Endothelial cell of umbilical vein (primary cell): ENCODE measurements at regions of chr3 and their contacts with region 1.

Region 1: DNA sequence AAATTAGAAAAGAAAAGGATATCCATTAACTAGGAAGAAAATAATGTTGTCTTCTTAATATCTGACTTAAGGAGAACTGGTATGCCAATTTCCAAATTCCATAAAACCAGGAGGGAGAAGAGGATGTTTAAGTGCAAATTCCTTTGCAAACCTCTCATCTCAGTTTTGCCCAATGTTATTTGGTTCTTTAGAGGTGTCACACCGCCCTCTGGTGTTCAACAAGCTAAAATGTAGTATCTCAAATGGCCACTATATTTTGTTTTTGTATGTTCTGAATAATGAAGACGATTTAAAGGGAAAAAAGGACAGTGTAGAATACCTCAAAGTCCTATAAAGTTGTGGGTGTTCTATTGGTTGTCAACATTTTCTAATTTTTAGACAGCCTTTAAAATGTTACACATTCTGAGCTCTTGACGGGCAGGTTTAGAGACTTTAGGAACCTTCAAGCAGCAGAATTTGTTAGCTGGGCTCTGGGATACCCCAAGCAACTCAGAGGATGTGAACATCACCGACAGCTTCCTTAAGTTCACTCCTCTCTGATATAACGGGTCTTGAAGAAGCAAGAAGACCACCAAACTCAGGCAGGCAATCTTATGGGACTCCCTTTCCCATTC is 458.3 kb downstream of the MFSD1 start:
- DNase-seq: peak; percentile 65
- H3K4me3 ChIP-seq: no peak overlapping the region
- H3K27ac ChIP-seq: no peak overlapping the region
- H3K4me1 ChIP-seq: no peaks in the 10 kb centered on the region
- H3K27me3 ChIP-seq: peaks cover 2 to 21% of the 10 kb centered on the region in 2 experiments
- CTCF ChIP-seq: peak; percentile 42 to 43
- POLR2A ChIP-seq: no peak

Region 2: DNA sequence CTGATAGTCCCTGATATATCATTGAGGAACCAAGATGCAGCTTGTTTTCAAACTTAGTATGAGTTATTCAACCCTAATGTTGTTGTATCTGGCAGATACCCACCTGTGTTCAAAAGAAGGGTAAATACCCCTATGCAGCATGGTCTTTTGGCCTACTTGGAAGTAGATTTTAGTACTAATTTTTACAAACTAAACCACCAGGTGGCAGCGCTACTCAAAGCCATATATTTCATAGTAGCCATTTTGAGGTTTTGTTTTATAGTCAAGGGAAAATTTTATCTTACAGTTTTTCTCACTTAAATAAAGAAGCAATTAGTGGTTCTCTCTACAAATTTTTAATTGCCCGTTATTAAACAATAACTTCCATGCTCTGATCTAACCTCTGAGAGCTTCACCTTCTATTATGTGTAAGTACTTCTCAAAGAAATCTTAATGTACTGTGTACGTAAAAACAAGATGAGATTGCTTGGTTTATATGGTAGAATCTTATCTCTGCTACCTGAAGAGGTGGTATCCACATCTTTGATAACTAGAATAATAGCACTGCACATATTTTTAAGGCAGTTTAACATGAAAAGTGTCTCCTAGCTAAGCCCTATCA is 720.6 kb before region 1 on chr3:
- CTCF ChIA-PET with region 1: interaction called, 3 read pairs
- POLR2A ChIA-PET with region 1: no interaction called
- dilution Hi-C with region 1: no loop called
- intact Hi-C with region 1: loop called (anchors 5 kb)
- DNase-seq: peak; percentile 70
- H3K4me3 ChIP-seq: no peak overlapping the region
- H3K27ac ChIP-seq: no peak overlapping the region
- H3K4me1 ChIP-seq: no peaks in the 10 kb centered on the region
- H3K27me3 ChIP-seq: no peaks in the 10 kb centered on the region
- CTCF ChIP-seq: peak; percentile 37 to 41
- POLR2A ChIP-seq: no peak

Region 3: DNA sequence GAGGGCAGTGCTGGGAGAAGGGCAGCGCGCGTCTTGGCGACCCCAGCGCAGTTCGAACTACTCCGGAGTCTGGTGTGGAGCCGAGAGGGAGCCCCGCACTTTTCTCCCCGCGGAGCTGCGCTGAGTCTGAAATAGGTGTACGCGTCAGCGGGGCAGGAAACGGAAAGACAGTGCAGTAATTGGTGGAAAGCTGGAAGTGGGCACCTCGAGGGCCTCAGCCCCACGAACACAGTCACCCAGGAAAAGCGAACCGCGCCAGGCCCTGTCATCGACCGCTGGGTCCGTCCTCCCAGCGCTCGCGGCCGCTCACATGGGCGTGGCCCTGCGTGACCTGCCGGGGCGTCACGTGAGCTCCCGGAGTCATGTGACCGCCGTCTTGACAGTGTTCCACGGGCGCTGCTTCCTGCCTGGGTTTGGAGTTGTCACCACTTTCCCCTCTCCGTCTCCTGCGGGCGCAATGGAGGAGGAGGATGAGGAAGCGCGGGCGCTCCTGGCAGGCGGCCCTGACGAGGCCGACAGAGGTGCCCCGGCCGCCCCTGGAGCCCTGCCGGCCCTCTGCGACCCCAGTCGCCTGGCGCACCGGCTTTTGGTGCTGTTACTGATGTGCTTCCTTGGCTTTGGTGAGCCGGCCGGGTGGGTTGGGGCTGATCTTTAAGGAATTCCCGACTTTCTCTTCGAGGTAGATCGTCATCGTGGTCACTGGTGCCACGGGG is 458.3 kb before region 1 on chr3 and contains the start of gene MFSD1:
- CTCF ChIA-PET with region 1: interaction called, 96 read pairs
- POLR2A ChIA-PET with region 1: no interaction called
- dilution Hi-C with region 1: no loop called
- intact Hi-C with region 1: no loop called
- DNase-seq: peak; percentile 87
- H3K4me3 ChIP-seq: peak within 1 kb of the TSS; percentile 47 to 78 (median 72)
- H3K27ac ChIP-seq: peak within 1 kb of the TSS; percentile 27
- H3K4me1 ChIP-seq: peaks cover 16% of the 10 kb centered on the region
- H3K27me3 ChIP-seq: no peaks in the 10 kb centered on the region
- CTCF ChIP-seq: no peak
- POLR2A ChIP-seq: peak; percentile 87
- total RNA-seq, gene MFSD1: 38.2 and 38.3 TPM in 2 replicates

Region 4: DNA sequence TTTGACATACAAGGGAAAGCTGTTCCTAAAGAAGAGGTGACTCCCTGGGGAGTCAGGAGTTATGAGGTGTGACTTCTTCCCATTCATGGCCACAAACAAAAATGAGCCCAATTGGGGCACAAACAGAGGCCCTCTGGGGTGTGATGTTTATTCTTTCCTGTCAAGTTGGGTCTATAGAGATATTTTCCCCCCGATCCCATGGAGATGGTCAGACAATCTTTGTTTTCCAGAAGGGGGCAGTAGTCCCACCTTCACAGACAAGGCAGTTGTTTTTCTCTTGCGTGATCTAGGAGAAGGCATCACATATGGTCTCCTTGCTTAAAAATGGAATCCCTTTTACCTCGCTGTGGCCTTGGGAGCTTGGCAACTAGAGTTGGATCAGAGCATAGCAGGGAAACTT is 348.0 kb before region 1 on chr3:
- CTCF ChIA-PET with region 1: interaction called, 121 read pairs
- POLR2A ChIA-PET with region 1: no interaction called
- dilution Hi-C with region 1: loop called (anchors 25 kb)
- intact Hi-C with region 1: no loop called
- DNase-seq: peak; percentile 4
- H3K4me3 ChIP-seq: no peak overlapping the region
- H3K27ac ChIP-seq: no peak overlapping the region
- H3K4me1 ChIP-seq: no peaks in the 10 kb centered on the region
- H3K27me3 ChIP-seq: no peaks in the 10 kb centered on the region
- CTCF ChIP-seq: peak in 1 of 2 donors; percentile 21
- POLR2A ChIP-seq: no peak

Region 5: DNA sequence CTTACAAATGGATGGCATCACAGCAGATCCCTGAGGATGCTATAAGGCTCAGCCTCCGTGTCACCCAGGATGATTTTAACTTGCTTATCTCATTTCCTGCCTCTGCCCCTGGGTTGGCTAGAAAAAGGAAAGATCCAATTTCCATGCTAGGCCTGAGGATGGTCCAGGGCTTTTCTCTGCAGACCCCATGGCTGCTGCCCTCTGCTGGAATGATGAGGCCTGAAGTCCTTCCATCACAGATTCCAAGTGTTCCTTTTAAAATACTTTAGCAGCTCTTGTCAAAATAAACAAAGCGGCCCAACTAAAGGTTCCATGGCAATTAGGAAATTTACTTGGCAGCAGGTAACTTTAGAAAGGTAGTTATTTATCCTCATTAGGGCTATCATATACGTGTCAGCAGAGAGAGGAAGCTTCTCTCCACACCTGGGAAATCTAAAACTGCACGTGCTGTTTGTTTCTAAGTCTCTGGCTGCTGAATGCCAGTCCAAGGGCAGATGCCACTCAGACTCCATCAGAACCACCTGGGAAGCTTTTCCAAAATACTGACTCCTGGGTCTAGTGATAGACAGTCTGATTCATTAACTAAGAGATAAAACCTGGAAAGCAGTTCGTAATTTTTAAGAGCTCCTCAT is 326.5 kb after region 1 on chr3:
- CTCF ChIA-PET with region 1: interaction called, 32 read pairs
- POLR2A ChIA-PET with region 1: no interaction called
- dilution Hi-C with region 1: no loop called
- intact Hi-C with region 1: loop called (anchors 1 kb)
- DNase-seq: peak; percentile 41
- H3K4me3 ChIP-seq: no peak overlapping the region
- H3K27ac ChIP-seq: no peak overlapping the region
- H3K4me1 ChIP-seq: no peaks in the 10 kb centered on the region
- H3K27me3 ChIP-seq: peaks cover 4 to 19% of the 10 kb centered on the region in 2 experiments
- CTCF ChIP-seq: peak; percentile 55 to 59
- POLR2A ChIP-seq: no peak

Region 6: GRCh38 chr3:159828542-159828943 is 568.4 kb after region 1 on chr3:
- CTCF ChIA-PET with region 1: interaction called, 7 read pairs
- POLR2A ChIA-PET with region 1: no interaction called
- dilution Hi-C with region 1: no loop called
- intact Hi-C with region 1: loop called (anchors 5 kb)
- DNase-seq: peak; percentile 80
- H3K4me3 ChIP-seq: no peak overlapping the region
- H3K27ac ChIP-seq: peak overlapping the region; percentile 32
- H3K4me1 ChIP-seq: peaks cover 32% of the 10 kb centered on the region
- H3K27me3 ChIP-seq: no peaks in the 10 kb centered on the region
- CTCF ChIP-seq: peak; percentile 28 to 42
- POLR2A ChIP-seq: no peak

Region 7: GRCh38 chr3:160486459-160486869 is 1226.3 kb after region 1 on chr3:
- CTCF ChIA-PET with region 1: no interaction called
- POLR2A ChIA-PET with region 1: no interaction called
- dilution Hi-C with region 1: no loop called
- intact Hi-C with region 1: loop called (anchors 5 kb)
- DNase-seq: peak; percentile 44
- H3K4me3 ChIP-seq: no peak overlapping the region
- H3K27ac ChIP-seq: no peak overlapping the region
- H3K4me1 ChIP-seq: peaks cover 5% of the 10 kb centered on the region
- H3K27me3 ChIP-seq: no peaks in the 10 kb centered on the region
- CTCF ChIP-seq: peak; percentile 30 to 36
- POLR2A ChIP-seq: no peak